ENCODE measurements at regions of chr4 and their contacts with region 1.

Region 1: DNA sequence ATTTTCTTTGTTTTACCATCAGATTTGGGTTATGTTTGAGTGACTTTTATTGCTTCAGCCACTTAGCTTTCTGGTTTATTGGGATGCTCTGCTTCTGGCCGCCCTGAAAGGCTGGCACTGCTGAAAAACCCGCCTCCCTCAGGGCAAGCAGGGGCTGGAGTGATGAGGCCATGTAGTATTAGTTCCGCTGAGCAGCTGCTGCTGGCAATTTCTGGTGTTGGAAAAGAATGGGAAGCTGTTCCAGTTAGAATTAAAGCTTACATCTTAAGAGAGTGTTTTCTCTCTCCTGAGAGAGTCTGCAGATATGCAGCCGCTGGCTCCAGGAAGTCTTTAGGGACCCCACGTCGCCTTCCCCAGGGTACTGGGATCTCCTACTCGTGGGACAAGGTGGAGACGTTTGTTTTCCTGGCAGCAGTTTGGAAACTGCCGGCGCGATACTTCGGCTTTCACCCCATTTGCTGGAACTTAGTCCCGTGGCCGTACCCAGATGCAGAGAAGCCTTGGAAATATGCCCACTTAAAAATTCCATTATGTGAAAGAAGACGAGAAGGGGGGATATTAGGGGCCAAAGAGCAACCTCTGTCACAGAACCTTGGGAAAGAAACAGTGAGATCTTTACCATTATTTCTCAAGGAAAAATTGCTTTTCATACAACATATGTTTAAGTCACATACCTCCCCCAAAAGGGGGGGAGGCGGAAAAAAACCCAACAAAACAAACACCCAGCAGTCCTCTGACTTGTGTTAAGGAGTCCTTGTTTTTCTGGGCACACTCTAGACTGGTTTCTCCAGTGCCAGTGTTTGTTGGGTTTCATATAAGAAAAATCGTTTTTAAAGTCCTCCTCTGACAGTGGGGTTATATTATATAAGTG is 72.6 kb downstream of the TMEM131L start:
- DNase-seq: no peak
- ATAC-seq: no peak
- H3K4me3 ChIP-seq: no peak overlapping the region
- H3K4me3 Mint-ChIP-seq: peak overlapping the region in 1 of 3 donors; percentile 49
- H3K27ac ChIP-seq: no peak overlapping the region
- H3K27ac Mint-ChIP-seq: peak overlapping the region; percentile 38 to 88
- H3K4me1 ChIP-seq: peaks cover 43 to 72% of the 10 kb centered on the region in 2 experiments
- H3K4me1 Mint-ChIP-seq: peaks cover 87 to 96% (median 95%) of the 10 kb centered on the region in 3 donors
- H3K27me3 ChIP-seq: no peaks in the 10 kb centered on the region
- H3K27me3 Mint-ChIP-seq: no peaks in the 10 kb centered on the region

Region 2: DNA sequence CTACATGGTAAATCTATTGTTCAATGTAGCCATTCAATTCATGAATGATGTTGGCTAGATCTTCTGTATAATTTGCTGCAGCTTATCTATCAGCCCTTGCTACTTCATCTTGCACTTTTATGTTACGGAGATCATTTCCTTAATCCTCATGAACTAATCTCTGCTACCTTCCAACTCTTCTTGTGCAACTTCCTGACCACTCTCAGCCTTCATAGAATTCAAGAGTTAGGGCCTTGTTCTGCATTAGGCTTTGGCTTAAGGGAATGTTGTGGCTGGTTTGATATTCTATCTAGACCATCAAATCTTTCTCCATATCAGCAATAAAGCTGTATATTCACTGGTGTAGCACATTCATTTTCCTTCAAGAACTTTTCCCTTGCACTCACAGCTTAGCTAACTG is 1874.7 kb after region 1 on chr4:
- CTCF ChIA-PET with region 1: no interaction called
- POLR2A ChIA-PET with region 1: interaction called in 1 of 2 experiments, 11 read pairs
- DNase-seq: no peak
- ATAC-seq: no peak
- H3K4me3 ChIP-seq: no peak overlapping the region
- H3K4me3 Mint-ChIP-seq: no peak overlapping the region
- H3K27ac ChIP-seq: no peak overlapping the region
- H3K27ac Mint-ChIP-seq: no peak overlapping the region
- H3K4me1 ChIP-seq: no peaks in the 10 kb centered on the region
- H3K4me1 Mint-ChIP-seq: no peaks in the 10 kb centered on the region
- H3K27me3 ChIP-seq: no peaks in the 10 kb centered on the region
- H3K27me3 Mint-ChIP-seq: peaks cover 10 to 16% of the 10 kb centered on the region in 2 donors

Measured in T-cell (primary cell).